HepG2 (cell line): ENCODE measurements at regions of chr4 and their contacts with region 1.

Region 1: GRCh38 chr4:13990596-13991589 is 363.4 kb upstream of the BOD1L1 start:
- DNase-seq: peak; percentile 20
- ATAC-seq: peak; percentile 86
- H3K4me3 ChIP-seq: no peak overlapping the region; a peak in 1 of 6 replicates
- H3K27ac ChIP-seq: peak overlapping the region; percentile 61
- H3K4me1 ChIP-seq: peaks cover 25% of the 10 kb centered on the region
- H3K27me3 ChIP-seq: no peaks in the 10 kb centered on the region
- CTCF ChIP-seq: no peak
- EP300 ChIP-seq: no peak; a peak in 2 of 4 replicates
- POLR2A ChIP-seq: no peak
- RAD21 ChIP-seq: no peak

Region 2: GRCh38 chr4:13829457-13829856 is 161.4 kb before region 1 on chr4:
- CTCF ChIA-PET with region 1: no interaction called
- POLR2A ChIA-PET with region 1: no interaction called
- in situ Hi-C with region 1: no loop called
- intact Hi-C with region 1: no loop called
- DNase-seq: no peak
- ATAC-seq: no peak
- H3K4me3 ChIP-seq: no peak overlapping the region
- H3K27ac ChIP-seq: no peak overlapping the region
- H3K4me1 ChIP-seq: no peaks in the 10 kb centered on the region
- H3K27me3 ChIP-seq: no peaks in the 10 kb centered on the region
- CTCF ChIP-seq: no peak
- EP300 ChIP-seq: no peak
- POLR2A ChIP-seq: no peak
- RAD21 ChIP-seq: no peak

Region 3: GRCh38 chr4:14864365-14865030 is 873.6 kb after region 1 on chr4:
- CTCF ChIA-PET with region 1: no interaction called
- POLR2A ChIA-PET with region 1: no interaction called
- in situ Hi-C with region 1: no loop called
- intact Hi-C with region 1: loop called (anchors 5 kb)
- DNase-seq: no peak
- ATAC-seq: no peak
- H3K4me3 ChIP-seq: no peak overlapping the region
- H3K27ac ChIP-seq: no peak overlapping the region
- H3K4me1 ChIP-seq: peaks cover 19% of the 10 kb centered on the region
- H3K27me3 ChIP-seq: no peaks in the 10 kb centered on the region
- CTCF ChIP-seq: no peak
- EP300 ChIP-seq: no peak
- POLR2A ChIP-seq: no peak
- RAD21 ChIP-seq: no peak